AG04450 (cell line): ENCODE measurements at regions of chr17 and their contacts with region 1.

Region 1: DNA sequence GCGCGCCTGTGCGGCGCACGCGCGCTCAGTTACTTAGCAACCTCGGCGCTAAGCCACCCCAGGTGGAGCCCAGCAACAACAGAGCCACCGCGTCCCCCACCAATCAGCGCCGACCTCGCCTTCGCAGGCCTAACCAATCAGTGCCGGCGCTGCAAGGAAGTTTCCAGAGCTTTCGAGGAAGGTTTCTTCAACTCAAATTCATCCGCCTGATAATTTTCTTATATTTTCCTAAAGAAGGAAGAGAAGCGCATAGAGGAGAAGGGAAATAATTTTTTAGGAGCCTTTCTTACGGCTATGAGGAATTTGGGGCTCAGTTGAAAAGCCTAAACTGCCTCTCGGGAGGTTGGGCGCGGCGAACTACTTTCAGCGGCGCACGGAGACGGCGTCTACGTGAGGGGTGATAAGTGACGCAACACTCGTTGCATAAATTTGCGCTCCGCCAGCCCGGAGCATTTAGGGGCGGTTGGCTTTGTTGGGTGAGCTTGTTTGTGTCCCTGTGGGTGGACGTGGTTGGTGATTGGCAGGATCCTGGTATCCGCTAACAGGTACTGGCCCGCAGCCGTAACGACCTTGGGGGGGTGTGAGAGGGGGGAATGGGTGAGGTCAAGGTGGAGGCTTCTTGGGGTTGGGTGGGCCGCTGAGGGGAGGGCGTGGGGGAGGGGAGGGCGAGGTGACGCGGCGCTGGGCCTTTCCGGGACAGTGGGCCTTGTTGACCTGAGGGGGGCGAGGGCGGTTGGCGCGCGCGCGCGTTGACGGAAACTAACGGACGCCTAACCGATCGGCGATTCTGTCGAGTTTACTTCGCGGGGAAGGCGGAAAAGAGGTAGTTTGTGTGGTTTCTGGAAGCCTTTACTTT is at the start of gene UBB:
- DNase-seq: peak; percentile 99
- H3K4me3 ChIP-seq: peak within 1 kb of the TSS; percentile 87
- H3K27ac ChIP-seq: peak within 1 kb of the TSS; percentile 94
- H3K27me3 ChIP-seq: no peaks in the 10 kb centered on the region
- CTCF ChIP-seq: no peak
- polyA plus RNA-seq, gene UBB: 1,944 and 3,172 TPM in 2 replicates

Region 2: GRCh38 chr17:16215273-16215964 is 165.4 kb before region 1 on chr17 and contains the start of gene NCOR1:
- CTCF ChIA-PET with region 1: no interaction called
- POLR2A ChIA-PET with region 1: interaction called, 10 read pairs
- DNase-seq: peak; percentile 77
- H3K4me3 ChIP-seq: peak within 1 kb of the TSS; percentile 92
- H3K27ac ChIP-seq: peak within 1 kb of the TSS; percentile 84
- H3K27me3 ChIP-seq: no peaks in the 10 kb centered on the region
- CTCF ChIP-seq: peak; percentile 42
- polyA plus RNA-seq, gene NCOR1: 109 and 127 TPM in 2 replicates

Region 3: DNA sequence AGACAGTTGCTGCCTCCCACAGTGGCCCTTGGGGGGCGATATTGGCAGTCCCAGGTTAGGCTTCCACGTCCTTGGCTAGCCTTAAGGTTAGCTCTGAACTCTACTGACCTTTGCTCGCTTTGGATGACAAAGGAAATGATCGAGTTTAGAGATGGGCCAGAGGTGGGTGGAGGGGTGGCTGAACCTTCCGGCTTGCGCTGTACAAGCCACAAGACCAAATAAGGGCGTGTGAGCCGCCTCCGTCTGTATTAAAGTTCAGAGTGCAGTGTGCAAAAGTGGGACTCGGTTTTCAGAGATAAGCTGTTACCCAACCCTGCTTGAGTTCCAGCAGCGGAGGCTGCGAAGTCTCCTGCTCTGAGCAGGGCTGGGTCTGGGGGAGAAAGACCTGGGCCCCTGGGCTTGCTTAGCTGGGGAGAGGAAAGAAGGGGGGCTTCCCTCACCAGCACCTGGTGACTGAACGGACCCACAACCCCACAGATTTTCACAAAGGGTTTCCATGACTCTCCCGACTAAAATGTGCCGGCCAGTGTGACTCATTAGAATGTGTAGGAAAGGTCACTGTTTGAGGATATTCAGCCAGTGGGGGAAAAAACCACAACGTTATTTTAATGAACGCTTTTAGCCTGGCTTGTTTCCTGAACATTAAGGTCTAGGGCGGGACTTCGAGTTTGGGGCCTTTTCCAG is 94.8 kb before region 1 on chr17:
- CTCF ChIA-PET with region 1: interaction called, 5 read pairs
- POLR2A ChIA-PET with region 1: interaction called, 13 read pairs
- DNase-seq: peak; percentile 96
- H3K4me3 ChIP-seq: peak overlapping the region; percentile 46
- H3K27ac ChIP-seq: peak overlapping the region; percentile 100
- H3K27me3 ChIP-seq: no peaks in the 10 kb centered on the region
- CTCF ChIP-seq: peak; percentile 49

Region 4: DNA sequence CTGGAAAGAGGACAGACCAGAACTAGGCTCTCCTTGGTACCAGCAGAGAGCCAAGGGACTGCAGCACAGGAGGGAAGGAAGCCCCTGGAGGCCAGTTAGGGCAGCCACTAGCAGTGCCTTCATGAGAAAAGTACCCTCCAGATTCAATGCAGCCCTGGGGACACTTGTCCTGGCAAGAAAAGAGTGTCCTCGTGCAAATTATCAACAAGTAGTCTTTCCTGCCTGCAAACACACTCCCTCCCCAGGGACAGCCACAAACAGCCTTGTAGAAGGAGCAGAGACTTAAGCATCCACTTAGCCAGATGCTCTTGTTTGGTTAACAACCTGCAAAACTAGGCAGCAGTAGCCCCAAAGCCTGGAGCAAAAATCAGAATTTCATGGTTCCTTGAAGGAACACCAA is 51.9 kb before region 1 on chr17:
- CTCF ChIA-PET with region 1: interaction called, 10 read pairs
- POLR2A ChIA-PET with region 1: no interaction called
- DNase-seq: no peak
- H3K4me3 ChIP-seq: no peak overlapping the region
- H3K27ac ChIP-seq: no peak overlapping the region
- H3K27me3 ChIP-seq: no peaks in the 10 kb centered on the region
- CTCF ChIP-seq: peak; percentile 39

Region 5: DNA sequence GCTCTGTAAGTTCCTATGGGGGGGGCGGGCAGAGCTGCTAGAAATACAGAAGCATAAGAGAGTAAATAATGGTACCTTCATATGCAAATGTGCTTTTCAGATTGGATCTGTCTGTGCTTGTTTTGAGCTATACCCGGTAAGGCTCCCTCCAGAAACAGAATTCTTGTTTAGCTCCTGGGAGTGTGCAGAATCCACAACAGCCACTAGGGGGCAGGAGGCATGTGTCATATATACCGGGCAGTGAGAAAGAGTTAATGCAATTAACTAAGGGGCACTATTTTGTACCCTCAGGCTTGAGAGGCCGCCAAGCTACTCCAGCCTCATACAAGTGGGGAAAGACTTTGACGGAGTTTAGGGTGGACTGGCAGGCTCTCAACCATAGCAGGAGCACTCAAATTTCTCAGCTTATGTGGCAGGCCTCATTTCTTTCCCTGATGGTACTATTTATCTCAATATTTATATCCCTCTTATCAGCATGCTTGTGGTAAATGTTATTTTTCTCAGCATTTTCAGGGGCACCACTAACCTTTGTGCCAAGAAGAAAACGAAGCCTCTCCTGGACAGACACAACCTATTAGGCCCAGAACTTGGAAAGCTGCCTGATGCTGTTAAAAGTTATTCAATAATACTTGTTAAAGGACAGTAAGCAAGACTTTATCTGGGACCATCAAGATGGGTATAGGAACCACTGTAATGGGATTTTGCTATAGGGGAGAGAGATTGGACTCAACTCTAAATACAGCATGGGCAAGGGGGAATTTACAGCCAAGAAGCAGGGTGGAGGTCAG is 16.9 kb before region 1 on chr17:
- CTCF ChIA-PET with region 1: interaction called, 26 read pairs
- POLR2A ChIA-PET with region 1: interaction called, 20 read pairs
- DNase-seq: no peak
- H3K4me3 ChIP-seq: no peak overlapping the region
- H3K27ac ChIP-seq: no peak overlapping the region
- H3K27me3 ChIP-seq: no peaks in the 10 kb centered on the region
- CTCF ChIP-seq: peak; percentile 97

Region 6: GRCh38 chr17:16415031-16415924 is 34.4 kb after region 1 on chr17 and contains the start of gene TRPV2:
- CTCF ChIA-PET with region 1: no interaction called
- POLR2A ChIA-PET with region 1: interaction called, 23 read pairs
- DNase-seq: no peak
- H3K4me3 ChIP-seq: peak within 1 kb of the TSS; percentile 68
- H3K27ac ChIP-seq: peak within 1 kb of the TSS; percentile 61
- H3K27me3 ChIP-seq: no peaks in the 10 kb centered on the region
- CTCF ChIP-seq: peak; percentile 11; the same call in 1 of the 2 replicates
- polyA plus RNA-seq, gene TRPV2: 30.8 and 38.4 TPM in 2 replicates

Region 7: GRCh38 chr17:16438557-16439302 is 57.9 kb after region 1 on chr17:
- CTCF ChIA-PET with region 1: interaction called, 3 read pairs
- POLR2A ChIA-PET with region 1: interaction called, 102 read pairs
- DNase-seq: peak; percentile 100
- H3K4me3 ChIP-seq: peak overlapping the region; percentile 99
- H3K27ac ChIP-seq: peak overlapping the region; percentile 86
- H3K27me3 ChIP-seq: no peaks in the 10 kb centered on the region
- CTCF ChIP-seq: no peak